Activated naive CD4-positive, alpha-beta T cell treated with anti-CD3 and anti-CD28 coated beads for 36 hours (primary cell): ENCODE measurements at regions of chr12 and their contacts with region 1.

Region 1: DNA sequence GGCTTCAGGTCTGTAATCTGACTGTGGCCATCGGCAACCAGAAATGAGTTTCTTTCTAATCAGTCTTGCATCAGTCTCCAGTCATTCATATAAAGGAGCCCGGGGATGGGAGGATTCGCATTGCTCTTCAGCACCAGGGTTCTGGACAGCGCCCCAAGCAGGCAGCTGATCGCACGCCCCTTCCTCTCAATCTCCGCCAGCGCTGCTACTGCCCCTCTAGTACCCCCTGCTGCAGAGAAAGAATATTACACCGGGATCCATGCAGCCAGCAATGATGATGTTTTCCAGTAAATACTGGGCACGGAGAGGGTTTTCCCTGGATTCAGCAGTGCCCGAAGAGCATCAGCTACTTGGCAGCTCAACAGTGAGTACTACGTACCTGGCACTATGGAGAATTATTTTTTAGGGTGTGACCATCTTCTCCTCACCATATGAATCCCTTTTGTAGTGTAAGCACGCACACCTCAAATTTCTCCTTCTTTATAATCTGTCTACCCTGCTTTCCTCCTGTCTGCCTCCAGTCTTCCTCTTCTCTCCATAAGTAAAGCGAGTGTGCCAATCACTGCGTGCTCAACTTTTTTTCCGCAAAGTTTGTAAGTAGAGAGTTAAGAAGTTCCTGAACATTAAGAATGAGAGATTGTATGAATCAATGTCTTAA is at the start of gene TPH2:
- DNase-seq: peak; percentile 70
- H3K4me3 Mint-ChIP-seq: no peak within 1 kb of the TSS
- H3K27ac Mint-ChIP-seq: no peak within 1 kb of the TSS
- H3K4me1 Mint-ChIP-seq: peaks cover 4% of the 10 kb centered on the region
- H3K27me3 Mint-ChIP-seq: peaks cover 41% of the 10 kb centered on the region
- total RNA-seq, gene TPH2: not detected

Region 2: DNA sequence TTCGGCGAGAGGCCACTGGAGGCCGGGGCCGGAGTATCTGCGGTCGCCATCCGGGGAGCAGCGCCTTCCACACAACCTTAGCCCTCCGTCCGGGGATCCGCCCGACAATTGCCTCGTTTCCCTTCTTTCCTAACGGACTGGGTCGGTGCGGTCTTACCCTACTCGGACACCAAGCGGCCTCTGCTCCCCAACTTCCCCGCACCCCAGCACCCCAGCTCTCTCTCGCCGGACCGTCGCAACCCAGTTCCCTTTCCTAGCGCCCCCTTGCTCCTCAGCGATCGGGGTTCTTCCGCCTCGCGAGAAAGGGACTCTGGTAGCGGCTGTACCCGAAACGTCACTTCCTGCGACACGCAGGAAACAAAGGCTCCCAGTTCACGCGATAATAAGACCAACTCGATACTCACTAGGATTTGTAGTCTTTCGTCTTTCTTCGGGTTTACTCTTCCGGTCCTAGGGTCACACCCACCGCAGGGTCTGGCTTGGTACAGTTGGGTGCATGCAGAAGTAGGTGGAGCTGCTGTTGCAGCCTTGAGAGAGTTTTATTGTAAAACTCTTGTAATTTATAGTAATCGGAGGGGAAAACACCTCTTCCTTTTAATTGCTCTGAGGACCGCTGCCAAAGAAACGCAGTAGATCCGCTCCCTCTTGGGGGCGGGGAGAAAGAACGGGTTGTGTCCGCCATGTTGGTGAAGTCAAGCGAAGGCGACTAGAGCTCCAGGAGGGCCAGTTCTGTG is 275.1 kb before region 1 on chr12 and contains the start of gene ZFC3H1:
- CTCF ChIA-PET with region 1: no interaction called
- intact Hi-C with region 1: loop called (anchors 5 kb)
- DNase-seq: peak; percentile 95
- H3K4me3 Mint-ChIP-seq: peak within 1 kb of the TSS; percentile 97
- H3K27ac Mint-ChIP-seq: peak within 1 kb of the TSS; percentile 99
- H3K4me1 Mint-ChIP-seq: peaks cover 42% of the 10 kb centered on the region
- H3K27me3 Mint-ChIP-seq: no peaks in the 10 kb centered on the region
- total RNA-seq, gene ZFC3H1: 56.9 to 62.6 TPM

Region 3: DNA sequence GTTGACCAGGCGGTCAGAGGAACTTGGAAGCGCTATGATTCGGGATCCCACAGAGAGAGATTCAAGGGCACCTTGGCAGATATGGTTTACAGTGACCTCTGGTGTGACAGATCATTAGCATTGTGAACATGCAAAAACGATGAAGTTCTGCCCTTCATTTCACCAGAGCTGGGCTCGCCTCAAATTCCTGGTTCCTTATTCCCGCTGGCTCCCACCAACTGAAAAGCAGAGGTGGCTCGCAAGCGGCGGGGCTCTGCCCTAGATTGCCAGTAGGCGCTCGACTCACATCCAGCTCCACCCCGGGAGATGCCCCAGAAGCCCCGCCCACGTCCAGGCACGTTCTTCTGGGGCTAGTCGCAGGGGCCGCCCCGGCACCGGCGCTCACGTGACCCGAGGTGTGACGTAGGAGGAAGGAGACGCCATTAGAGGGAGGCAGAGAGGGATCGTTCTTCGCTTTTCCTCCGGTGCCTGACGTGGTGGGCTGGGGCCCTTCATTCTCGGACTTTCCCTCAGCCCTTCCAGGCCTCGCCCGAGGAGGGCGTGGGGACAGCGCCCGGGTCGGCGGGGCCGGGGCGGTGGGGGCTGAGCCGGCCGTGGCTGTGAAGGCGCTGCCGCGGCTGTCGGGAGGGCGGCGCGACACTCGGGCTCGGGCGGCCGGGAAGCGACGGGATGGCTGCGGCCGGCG is 184.3 kb before region 1 on chr12 and contains the start of gene RAB21:
- CTCF ChIA-PET with region 1: no interaction called
- intact Hi-C with region 1: loop called (anchors 5 kb)
- DNase-seq: peak; percentile 99
- H3K4me3 Mint-ChIP-seq: peak within 1 kb of the TSS; percentile 89
- H3K27ac Mint-ChIP-seq: peak within 1 kb of the TSS; percentile 96
- H3K4me1 Mint-ChIP-seq: peaks cover 35% of the 10 kb centered on the region
- H3K27me3 Mint-ChIP-seq: peaks cover 7% of the 10 kb centered on the region
- total RNA-seq, gene RAB21: 76.3 to 80.3 TPM

Region 4: DNA sequence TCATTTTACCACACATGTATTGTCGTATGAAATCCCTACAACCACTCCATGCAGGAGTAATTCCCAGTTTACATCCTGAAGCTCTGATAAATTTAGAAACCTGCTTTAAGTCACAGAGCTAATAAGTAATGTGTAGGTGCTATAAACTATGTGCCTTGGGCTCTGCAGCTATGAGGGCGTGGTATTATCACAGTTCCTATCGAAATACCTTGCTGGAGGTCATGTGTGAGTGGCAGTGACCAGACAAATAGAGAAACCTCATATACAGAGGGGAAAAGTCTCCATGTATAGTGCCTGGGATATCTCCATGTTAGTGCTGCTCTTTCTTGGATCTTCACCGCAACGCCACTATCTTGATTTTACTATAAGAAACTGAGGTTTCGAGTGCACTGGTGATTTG is 100.2 kb before region 1 on chr12:
- CTCF ChIA-PET with region 1: no interaction called
- intact Hi-C with region 1: loop called (anchors 5 kb)
- DNase-seq: no peak
- H3K4me3 Mint-ChIP-seq: peak overlapping the region; percentile 94
- H3K27ac Mint-ChIP-seq: peak overlapping the region; percentile 98
- H3K4me1 Mint-ChIP-seq: peaks cover 54% of the 10 kb centered on the region
- H3K27me3 Mint-ChIP-seq: no peaks in the 10 kb centered on the region

Region 5: GRCh38 chr12:71900091-71900490 is 38.8 kb before region 1 on chr12:
- CTCF ChIA-PET with region 1: no interaction called
- intact Hi-C with region 1: loop called (anchors 5 kb)
- DNase-seq: no peak
- H3K4me3 Mint-ChIP-seq: no peak overlapping the region
- H3K27ac Mint-ChIP-seq: no peak overlapping the region
- H3K4me1 Mint-ChIP-seq: peaks cover 17% of the 10 kb centered on the region
- H3K27me3 Mint-ChIP-seq: no peaks in the 10 kb centered on the region